Caco-2 (cell line): ENCODE measurements at regions of chr5 and their contacts with region 1.

Region 1: DNA sequence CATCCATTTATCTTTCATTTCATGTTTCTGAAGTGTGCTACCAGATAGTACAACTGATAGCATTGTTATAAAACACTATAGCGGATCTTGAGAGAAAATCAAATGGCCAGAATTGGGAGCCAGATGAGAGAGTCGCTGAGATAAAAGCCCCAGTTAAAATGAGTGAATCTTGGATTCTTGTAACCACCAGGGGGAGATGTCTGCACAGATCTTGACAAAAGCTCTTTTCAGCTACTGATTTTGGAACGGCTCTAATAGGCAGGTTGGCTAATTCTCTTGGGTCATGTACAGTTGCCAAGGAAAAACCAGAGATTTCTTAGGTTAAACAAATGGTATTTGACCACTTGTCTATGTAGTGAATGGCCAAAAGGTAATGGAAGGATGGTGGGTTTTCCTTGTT is 21.7 kb downstream of the F2RL2 start:
- DNase-seq: peak in 1 of 2 experiments; percentile 62
- H3K4me3 ChIP-seq: no peak overlapping the region
- H3K4me3 Mint-ChIP-seq: no peak overlapping the region
- H3K27ac Mint-ChIP-seq: no peak overlapping the region
- H3K4me1 ChIP-seq: no peaks in the 10 kb centered on the region
- H3K4me1 Mint-ChIP-seq: peaks cover 9% of the 10 kb centered on the region
- H3K27me3 ChIP-seq: no peaks in the 10 kb centered on the region
- H3K27me3 Mint-ChIP-seq: no peaks in the 10 kb centered on the region
- CTCF ChIP-seq: peak; percentile 70 to 82

Region 2: GRCh38 chr5:76556511-76557221 is 44.8 kb before region 1 on chr5:
- CTCF ChIA-PET with region 1: no interaction called
- POLR2A ChIA-PET with region 1: no interaction called
- intact Hi-C with region 1: no loop called
- DNase-seq: peak in 1 of 2 experiments; percentile 16
- H3K4me3 ChIP-seq: no peak overlapping the region
- H3K4me3 Mint-ChIP-seq: no peak overlapping the region
- H3K27ac Mint-ChIP-seq: no peak overlapping the region
- H3K4me1 ChIP-seq: no peaks in the 10 kb centered on the region
- H3K4me1 Mint-ChIP-seq: no peaks in the 10 kb centered on the region
- H3K27me3 ChIP-seq: no peaks in the 10 kb centered on the region
- H3K27me3 Mint-ChIP-seq: no peaks in the 10 kb centered on the region
- CTCF ChIP-seq: no peak

Region 3: GRCh38 chr5:76641514-76642120 is 40.1 kb after region 1 on chr5:
- CTCF ChIA-PET with region 1: interaction called, 4 read pairs
- POLR2A ChIA-PET with region 1: no interaction called
- intact Hi-C with region 1: loop called (anchors 1 kb)
- DNase-seq: peak; percentile 51 to 75
- H3K4me3 ChIP-seq: no peak overlapping the region
- H3K4me3 Mint-ChIP-seq: no peak overlapping the region
- H3K27ac Mint-ChIP-seq: no peak overlapping the region
- H3K4me1 ChIP-seq: no peaks in the 10 kb centered on the region
- H3K4me1 Mint-ChIP-seq: peaks cover 4% of the 10 kb centered on the region
- H3K27me3 ChIP-seq: no peaks in the 10 kb centered on the region
- H3K27me3 Mint-ChIP-seq: no peaks in the 10 kb centered on the region
- CTCF ChIP-seq: peak; percentile 70 to 86

Region 4: GRCh38 chr5:77015938-77016569 is 414.6 kb after region 1 on chr5:
- CTCF ChIA-PET with region 1: no interaction called
- POLR2A ChIA-PET with region 1: no interaction called
- intact Hi-C with region 1: loop called (anchors 5 kb)
- DNase-seq: peak in 1 of 2 experiments; percentile 52
- H3K4me3 ChIP-seq: no peak overlapping the region
- H3K4me3 Mint-ChIP-seq: no peak overlapping the region
- H3K27ac Mint-ChIP-seq: no peak overlapping the region
- H3K4me1 ChIP-seq: no peaks in the 10 kb centered on the region
- H3K4me1 Mint-ChIP-seq: peaks cover 8% of the 10 kb centered on the region
- H3K27me3 ChIP-seq: no peaks in the 10 kb centered on the region; the same call in 1 of the 2 replicates
- H3K27me3 Mint-ChIP-seq: no peaks in the 10 kb centered on the region
- CTCF ChIP-seq: peak; percentile 30 to 54